ENCODE measurements at regions of chr7 and their contacts with region 1.

Region 1: GRCh38 chr7:134686786-134687185 is 40.1 kb downstream of the BPGM start:
- DNase-seq: peak in 1 of 2 experiments; percentile 74
- H3K4me3 ChIP-seq: no peak overlapping the region
- H3K4me1 ChIP-seq: peaks cover 29% of the 10 kb centered on the region
- H3K27me3 ChIP-seq: no peaks in the 10 kb centered on the region

Region 2: GRCh38 chr7:134212576-134213546 is 473.9 kb before region 1 on chr7:
- in situ Hi-C with region 1: no loop called
- DNase-seq: no peak
- H3K4me3 ChIP-seq: no peak overlapping the region
- H3K4me1 ChIP-seq: no peaks in the 10 kb centered on the region; the same call in 1 of the 2 replicates
- H3K27me3 ChIP-seq: no peaks in the 10 kb centered on the region

Region 3: GRCh38 chr7:134954197-134955082 is 267.7 kb after region 1 on chr7:
- in situ Hi-C with region 1: loop called (anchors 10 kb)
- DNase-seq: peak in 1 of 2 experiments; percentile 68
- H3K4me3 ChIP-seq: no peak overlapping the region
- H3K4me1 ChIP-seq: no peaks in the 10 kb centered on the region
- H3K27me3 ChIP-seq: no peaks in the 10 kb centered on the region